PC-3 (cell line): ENCODE measurements at regions of chr3 and their contacts with region 1.

Region 1: GRCh38 chr3:169026543-169027182 is 636.8 kb downstream of the MECOM start:
- DNase-seq: peak; percentile 91
- ATAC-seq: peak; percentile 82
- H3K4me3 ChIP-seq: peak overlapping the region; percentile 36; the same call in 1 of the 2 replicates
- H3K27ac ChIP-seq: peak overlapping the region; percentile 34
- H3K4me1 ChIP-seq: peaks cover 43% of the 10 kb centered on the region
- H3K27me3 ChIP-seq: no peaks in the 10 kb centered on the region
- CTCF ChIP-seq: no peak

Region 2: GRCh38 chr3:168061332-168061996 is 965.2 kb before region 1 on chr3:
- CTCF ChIA-PET with region 1: no interaction called
- POLR2A ChIA-PET with region 1: no interaction called
- intact Hi-C with region 1: no loop called
- DNase-seq: peak; percentile 28
- ATAC-seq: peak; percentile 91
- H3K4me3 ChIP-seq: 0 out of 2 replicates have a peak overlapping the region, but pooled peaks have one; percentile 3
- H3K27ac ChIP-seq: no peak overlapping the region
- H3K4me1 ChIP-seq: peaks cover 7% of the 10 kb centered on the region; the same call in 1 of the 2 replicates
- H3K27me3 ChIP-seq: no peaks in the 10 kb centered on the region
- CTCF ChIP-seq: peak; percentile 51

Region 3: DNA sequence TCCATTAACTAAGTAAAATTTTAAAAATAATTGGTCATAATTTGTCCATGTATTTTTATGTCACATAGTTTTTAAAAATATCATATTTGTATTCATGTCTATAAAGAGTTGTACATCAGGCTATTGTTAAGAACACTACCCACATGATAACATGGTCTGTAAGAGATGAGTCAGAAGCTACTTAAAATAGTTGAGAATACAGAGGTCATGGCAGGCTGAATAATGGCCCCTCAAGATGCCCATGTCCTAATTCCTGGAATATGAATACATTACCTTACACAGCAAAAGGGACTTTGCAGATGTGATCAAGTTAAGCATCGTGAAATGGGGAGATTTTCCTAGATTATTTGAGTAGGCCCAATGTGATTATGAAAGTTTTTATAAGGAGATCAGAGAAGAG is 148.0 kb before region 1 on chr3:
- CTCF ChIA-PET with region 1: no interaction called
- POLR2A ChIA-PET with region 1: interaction called, 3 read pairs
- intact Hi-C with region 1: loop called (anchors 10 kb)
- DNase-seq: peak; percentile 66
- ATAC-seq: peak; percentile 85
- H3K4me3 ChIP-seq: peak overlapping the region; percentile 8; the same call in 1 of the 2 replicates
- H3K27ac ChIP-seq: peak overlapping the region; percentile 73
- H3K4me1 ChIP-seq: peaks cover 56% of the 10 kb centered on the region
- H3K27me3 ChIP-seq: no peaks in the 10 kb centered on the region
- CTCF ChIP-seq: no peak

Region 4: DNA sequence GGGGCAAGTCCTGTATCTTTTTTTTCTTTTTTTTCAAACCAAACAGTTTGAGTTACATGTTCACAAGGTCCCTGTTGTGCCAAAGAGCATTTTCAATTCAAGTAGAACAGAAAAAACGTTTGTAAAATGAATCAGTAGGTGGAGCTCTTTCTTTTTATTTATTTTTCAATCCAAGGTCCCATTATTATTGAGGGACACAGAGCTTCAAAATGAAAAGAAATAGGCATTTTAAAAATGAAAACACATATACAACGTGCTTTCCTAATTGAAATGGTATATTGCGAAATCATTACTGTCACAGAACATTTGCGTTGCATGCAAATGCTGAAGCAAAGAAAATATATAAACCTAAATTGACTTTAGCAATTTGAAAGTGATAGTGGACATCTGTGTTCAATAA is 74.1 kb before region 1 on chr3:
- CTCF ChIA-PET with region 1: no interaction called
- POLR2A ChIA-PET with region 1: no interaction called
- intact Hi-C with region 1: loop called (anchors 5 kb)
- DNase-seq: peak; percentile 73
- ATAC-seq: peak; percentile 47
- H3K4me3 ChIP-seq: no peak overlapping the region
- H3K27ac ChIP-seq: peak overlapping the region; percentile 89
- H3K4me1 ChIP-seq: peaks cover 34% of the 10 kb centered on the region
- H3K27me3 ChIP-seq: no peaks in the 10 kb centered on the region
- CTCF ChIP-seq: peak; percentile 73

Region 5: GRCh38 chr3:169002689-169003088 is 24.0 kb before region 1 on chr3:
- CTCF ChIA-PET with region 1: no interaction called
- POLR2A ChIA-PET with region 1: no interaction called
- intact Hi-C with region 1: loop called (anchors 2 kb)
- DNase-seq: peak; percentile 64
- ATAC-seq: peak; percentile 58
- H3K4me3 ChIP-seq: no peak overlapping the region
- H3K27ac ChIP-seq: no peak overlapping the region
- H3K4me1 ChIP-seq: peaks cover 38% of the 10 kb centered on the region
- H3K27me3 ChIP-seq: no peaks in the 10 kb centered on the region
- CTCF ChIP-seq: no peak

Region 6: DNA sequence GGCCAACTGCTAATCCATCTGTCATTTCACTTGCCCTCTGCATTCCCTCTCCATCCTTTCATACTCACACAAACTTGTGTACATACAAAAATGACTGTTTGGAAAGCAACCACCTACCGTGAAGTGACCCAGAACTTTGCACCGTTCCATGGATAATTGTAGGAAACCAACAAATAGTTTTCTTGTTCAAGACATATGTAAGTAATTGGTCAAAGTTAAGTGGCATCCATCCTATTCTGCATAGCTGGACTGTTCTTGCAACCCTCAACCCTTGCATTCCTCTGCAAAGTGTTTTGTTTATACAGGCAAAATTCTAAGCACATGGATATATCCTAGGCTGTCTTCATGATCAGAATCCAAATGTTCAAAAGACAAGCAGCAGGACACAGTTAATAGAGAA is 44.3 kb after region 1 on chr3:
- CTCF ChIA-PET with region 1: no interaction called
- POLR2A ChIA-PET with region 1: no interaction called
- intact Hi-C with region 1: no loop called
- DNase-seq: no peak
- ATAC-seq: no peak
- H3K4me3 ChIP-seq: no peak overlapping the region
- H3K27ac ChIP-seq: no peak overlapping the region
- H3K4me1 ChIP-seq: no peaks in the 10 kb centered on the region
- H3K27me3 ChIP-seq: no peaks in the 10 kb centered on the region
- CTCF ChIP-seq: no peak

Region 7: GRCh38 chr3:169497567-169498257 is 471.0 kb after region 1 on chr3:
- CTCF ChIA-PET with region 1: no interaction called
- POLR2A ChIA-PET with region 1: no interaction called
- intact Hi-C with region 1: loop called (anchors 10 kb)
- DNase-seq: peak; percentile 95
- ATAC-seq: peak; percentile 91
- H3K4me3 ChIP-seq: peak overlapping the region; percentile 12; the same call in 1 of the 2 replicates
- H3K27ac ChIP-seq: peak overlapping the region; percentile 44
- H3K4me1 ChIP-seq: peaks cover 19% of the 10 kb centered on the region
- H3K27me3 ChIP-seq: no peaks in the 10 kb centered on the region
- CTCF ChIP-seq: no peak